Caco-2 (cell line): ENCODE measurements at regions of chr1 and their contacts with region 1.

Region 1: DNA sequence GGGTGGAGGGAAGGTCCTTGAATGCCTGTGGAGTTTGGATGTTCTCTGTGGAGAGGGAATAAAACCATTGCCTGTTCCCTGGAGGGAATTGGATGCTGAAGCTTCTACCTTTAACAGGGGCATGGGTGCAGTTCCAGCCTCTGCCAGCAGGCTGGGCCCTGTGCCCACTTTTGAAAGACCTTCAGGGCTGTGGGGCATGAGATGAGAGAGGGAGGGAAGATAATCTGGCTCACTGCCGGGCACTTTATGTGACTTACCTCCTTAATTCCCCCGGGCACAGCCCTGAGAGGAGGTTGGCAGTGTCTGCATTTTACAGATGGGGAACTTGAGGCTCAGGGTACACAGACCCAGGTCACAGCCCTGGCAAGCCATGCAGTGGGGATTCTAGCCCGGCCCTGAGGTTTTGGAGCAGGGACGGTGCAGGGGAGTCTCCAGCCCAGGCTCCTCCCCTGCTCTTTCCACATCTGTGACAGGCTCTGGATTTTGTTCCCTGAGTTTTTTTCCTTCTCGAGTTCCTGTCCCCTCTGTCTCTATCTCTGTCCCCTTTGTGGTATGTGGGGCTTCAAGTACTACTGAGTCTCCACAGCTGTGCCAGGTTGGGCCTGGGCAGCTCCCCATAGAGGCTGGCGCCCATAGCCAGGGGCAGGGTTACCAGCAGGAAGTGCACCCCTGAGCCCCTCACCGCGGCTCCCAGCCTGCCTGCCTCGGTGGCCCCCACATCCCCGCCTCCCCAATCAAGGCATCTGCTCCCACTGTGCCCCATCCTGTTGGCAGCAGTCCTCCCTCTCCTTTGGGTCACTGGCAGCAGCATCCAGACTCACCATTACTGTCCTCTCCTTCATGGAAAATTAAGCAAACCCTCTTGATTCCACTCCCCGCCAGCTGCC is 14.0 kb upstream of the THEMIS2 start:
- DNase-seq: peak; percentile 63 to 71
- H3K4me3 ChIP-seq: no peak overlapping the region
- H3K4me3 Mint-ChIP-seq: no peak overlapping the region
- H3K27ac Mint-ChIP-seq: peak overlapping the region; percentile 54
- H3K4me1 ChIP-seq: no peaks in the 10 kb centered on the region
- H3K4me1 Mint-ChIP-seq: no peaks in the 10 kb centered on the region
- H3K27me3 ChIP-seq: no peaks in the 10 kb centered on the region
- H3K27me3 Mint-ChIP-seq: no peaks in the 10 kb centered on the region
- CTCF ChIP-seq: peak; percentile 84

Region 2: DNA sequence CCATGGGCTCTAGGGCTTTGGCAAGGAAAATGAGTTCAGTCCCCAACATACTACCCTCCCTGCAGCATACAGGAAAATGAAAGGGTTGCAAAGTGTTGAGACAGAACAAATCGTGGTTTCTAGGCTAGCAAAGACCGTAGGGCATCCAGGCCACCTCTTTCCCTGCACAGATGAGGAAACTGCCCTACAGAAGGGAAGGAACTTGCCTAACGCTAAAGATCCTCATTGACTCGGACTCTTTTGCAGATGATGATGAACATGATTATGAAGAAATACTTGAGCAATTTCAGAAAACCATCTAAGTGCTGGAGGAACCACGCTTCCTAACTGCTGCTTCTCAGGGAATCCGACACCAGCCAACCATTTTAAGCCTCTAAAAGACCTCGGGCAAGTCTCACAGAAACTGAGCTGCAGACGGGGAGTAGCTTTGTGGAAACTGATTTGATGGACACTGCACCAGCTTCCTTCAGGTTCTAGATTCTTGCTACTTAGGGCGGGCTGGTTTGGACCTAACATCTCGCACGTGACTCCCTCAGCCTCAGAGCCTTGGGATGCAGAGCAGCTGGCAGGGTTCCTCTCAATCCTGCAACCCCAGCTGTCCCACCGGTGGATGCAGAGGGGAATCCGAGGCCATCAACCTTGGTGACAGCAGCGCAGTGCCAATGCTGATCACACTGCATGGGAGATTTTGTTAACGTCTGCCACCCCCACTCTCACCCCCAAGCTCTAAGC is 27.5 kb after region 1 on chr1:
- CTCF ChIA-PET with region 1: interaction called, 10 read pairs
- POLR2A ChIA-PET with region 1: no interaction called
- intact Hi-C with region 1: no loop called
- DNase-seq: no peak
- H3K4me3 ChIP-seq: no peak overlapping the region
- H3K4me3 Mint-ChIP-seq: no peak overlapping the region
- H3K27ac Mint-ChIP-seq: no peak overlapping the region
- H3K4me1 ChIP-seq: no peaks in the 10 kb centered on the region
- H3K4me1 Mint-ChIP-seq: no peaks in the 10 kb centered on the region
- H3K27me3 ChIP-seq: no peaks in the 10 kb centered on the region
- H3K27me3 Mint-ChIP-seq: no peaks in the 10 kb centered on the region
- CTCF ChIP-seq: no peak

Region 3: DNA sequence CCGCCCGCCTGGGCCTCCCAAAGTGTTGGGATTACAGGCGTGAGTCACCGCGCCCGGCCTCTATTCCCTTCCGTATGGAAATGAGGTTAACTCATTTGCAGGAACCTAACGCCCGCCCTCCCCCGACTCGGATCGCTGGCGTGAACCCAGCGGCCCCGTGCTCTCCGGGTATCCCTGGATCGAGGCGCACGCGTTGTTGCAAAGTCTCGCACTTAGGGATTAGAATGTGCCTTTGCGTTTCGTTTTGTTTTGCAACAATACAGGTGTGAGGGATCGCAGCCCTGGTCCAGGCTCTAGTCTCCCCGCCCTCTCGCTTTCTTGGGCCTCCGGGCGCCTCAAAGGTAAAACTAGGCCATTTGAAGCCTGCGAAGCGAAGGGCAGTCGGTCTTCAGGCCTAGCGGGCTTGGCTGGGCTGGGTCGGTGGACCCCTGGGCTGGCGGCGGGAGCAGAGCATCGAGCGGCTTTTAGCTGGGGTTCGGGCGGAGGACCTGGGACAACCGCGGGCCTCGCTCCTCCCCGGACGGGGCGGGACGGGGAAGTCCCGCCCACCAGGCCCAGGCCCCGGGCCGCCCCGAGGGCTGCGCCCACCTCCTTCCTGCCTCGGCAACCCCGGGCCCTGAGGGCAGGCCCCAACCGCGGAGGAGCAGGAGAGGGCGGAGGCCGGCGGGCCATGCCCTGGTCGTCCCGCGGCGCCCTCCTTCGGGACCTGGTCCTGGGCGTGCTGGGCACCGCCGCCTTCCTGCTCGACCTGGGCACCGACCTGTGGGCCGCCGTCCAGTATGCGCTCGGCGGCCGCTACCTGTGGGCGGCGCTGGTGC is 101.3 kb after region 1 on chr1 and contains the start of gene XKR8:
- CTCF ChIA-PET with region 1: no interaction called
- POLR2A ChIA-PET with region 1: no interaction called
- intact Hi-C with region 1: loop called (anchors 5 kb)
- DNase-seq: peak; percentile 84
- H3K4me3 ChIP-seq: peak within 1 kb of the TSS; percentile 63
- H3K4me3 Mint-ChIP-seq: peak within 1 kb of the TSS; percentile 77
- H3K27ac Mint-ChIP-seq: peak within 1 kb of the TSS; percentile 83
- H3K4me1 ChIP-seq: no peaks in the 10 kb centered on the region
- H3K4me1 Mint-ChIP-seq: no peaks in the 10 kb centered on the region
- H3K27me3 ChIP-seq: no peaks in the 10 kb centered on the region
- H3K27me3 Mint-ChIP-seq: no peaks in the 10 kb centered on the region
- CTCF ChIP-seq: peak; percentile 35 to 67
- total RNA-seq, gene XKR8: 8.9 and 10.4 TPM in 2 replicates

Region 4: GRCh38 chr1:27979151-27979858 is 121.0 kb after region 1 on chr1:
- CTCF ChIA-PET with region 1: no interaction called
- POLR2A ChIA-PET with region 1: no interaction called
- intact Hi-C with region 1: loop called (anchors 1 kb)
- DNase-seq: peak in 1 of 2 experiments; percentile 24
- H3K4me3 ChIP-seq: no peak overlapping the region
- H3K4me3 Mint-ChIP-seq: no peak overlapping the region
- H3K27ac Mint-ChIP-seq: no peak overlapping the region
- H3K4me1 ChIP-seq: no peaks in the 10 kb centered on the region
- H3K4me1 Mint-ChIP-seq: no peaks in the 10 kb centered on the region
- H3K27me3 ChIP-seq: no peaks in the 10 kb centered on the region
- H3K27me3 Mint-ChIP-seq: no peaks in the 10 kb centered on the region
- CTCF ChIP-seq: peak; percentile 30 to 47